T-cell (primary cell): ENCODE measurements at regions of chr11 and their contacts with region 1.

Region 1: DNA sequence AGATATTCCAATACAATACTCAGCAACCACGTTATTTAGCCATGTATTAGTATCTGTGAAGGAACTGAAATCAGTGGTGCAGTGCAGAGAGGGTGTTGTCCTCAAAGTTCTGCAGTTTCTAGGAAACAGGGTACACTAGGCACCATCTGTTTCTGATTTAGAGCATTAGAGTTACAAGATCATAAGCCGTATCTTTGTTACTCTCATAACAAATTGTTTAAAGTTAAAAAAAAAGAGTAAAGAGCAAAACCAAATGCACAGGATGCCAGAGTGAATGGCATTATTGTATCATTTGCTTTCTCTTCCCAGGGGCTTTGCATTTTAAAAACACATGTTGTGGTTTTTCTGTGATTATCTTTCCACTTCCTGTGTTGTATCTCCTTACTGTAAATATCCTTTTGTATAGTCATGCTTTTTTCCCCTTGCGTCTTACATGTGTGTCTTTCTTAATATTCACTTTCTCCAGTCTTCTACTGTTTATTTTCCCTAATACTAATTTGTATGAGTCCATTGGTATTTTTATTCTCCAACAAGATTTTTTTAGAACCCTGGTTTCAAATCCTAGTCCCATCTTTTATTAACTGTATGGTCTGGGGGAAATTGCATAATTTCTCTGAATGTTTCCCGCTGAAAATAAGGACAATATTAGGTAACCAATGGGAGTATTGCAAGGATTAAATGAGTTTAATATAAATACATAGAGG is 15.2 kb upstream of the NUP160 start:
- DNase-seq: peak in 7 of 35 experiments; percentile 2 to 49 (median 12)
- ATAC-seq: peak; percentile 79 to 87 (median 80)
- H3K4me3 ChIP-seq: no peak overlapping the region
- H3K4me3 Mint-ChIP-seq: peak overlapping the region in 2 of 3 donors; percentile 5 to 54
- H3K27ac ChIP-seq: peak overlapping the region; percentile 47
- H3K27ac Mint-ChIP-seq: peak overlapping the region; percentile 69 to 91
- H3K4me1 ChIP-seq: peaks cover 21 to 25% of the 10 kb centered on the region in 2 experiments
- H3K4me1 Mint-ChIP-seq: peaks cover 33 to 51% (median 42%) of the 10 kb centered on the region in 3 donors
- H3K27me3 ChIP-seq: no peaks in the 10 kb centered on the region
- H3K27me3 Mint-ChIP-seq: no peaks in the 10 kb centered on the region

Region 2: DNA sequence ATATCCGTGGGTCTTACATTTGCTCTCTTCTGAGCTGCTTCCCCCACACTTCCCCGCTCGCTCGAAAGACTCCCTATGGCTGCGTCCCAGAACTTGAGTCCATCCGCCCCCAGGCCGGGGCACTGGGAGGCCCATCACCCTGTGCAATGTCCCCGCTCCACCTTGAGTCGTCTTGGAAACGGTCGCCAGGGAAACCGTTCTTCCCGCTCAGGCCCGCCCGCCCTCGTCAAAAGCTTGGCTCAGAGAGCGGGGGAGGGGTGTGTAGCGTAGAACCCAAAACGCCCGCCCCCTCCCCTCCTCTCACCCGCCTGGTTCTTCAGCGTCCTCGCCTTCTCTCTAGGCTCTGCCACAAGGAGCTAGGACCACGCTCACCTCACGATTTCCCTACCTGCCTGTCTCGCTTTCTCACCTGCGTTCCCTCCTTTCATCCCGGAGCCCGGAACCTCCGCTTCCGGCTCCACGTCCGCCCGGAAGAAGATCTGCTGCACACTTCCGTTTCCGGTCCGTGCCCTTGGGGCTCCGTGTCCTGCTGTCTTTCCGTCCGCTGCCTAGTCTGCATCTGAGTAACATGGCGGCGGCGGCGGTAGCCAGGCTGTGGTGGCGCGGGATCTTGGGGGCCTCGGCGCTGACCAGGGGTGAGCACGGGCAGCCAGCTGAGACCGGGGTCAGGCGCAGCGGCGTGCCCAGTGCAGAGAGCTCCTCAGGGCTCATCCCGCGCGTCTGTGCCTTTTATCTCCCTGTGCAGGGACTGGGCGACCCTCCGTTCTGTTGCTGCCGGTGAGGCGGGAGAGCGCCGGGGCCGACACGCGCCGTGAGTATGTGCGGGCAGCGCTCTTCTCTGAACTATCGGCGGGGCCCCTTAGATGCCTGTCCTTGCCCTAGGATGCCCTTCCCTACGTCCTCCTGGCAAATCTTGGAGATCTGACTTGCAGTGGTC is 284.5 kb before region 1 on chr11 and contains the starts of genes KBTBD4 and NDUFS3:
- CTCF ChIA-PET with region 1: no interaction called
- POLR2A ChIA-PET with region 1: no interaction called
- DNase-seq: peak; percentile 70 to 95 (median 83)
- ATAC-seq: peak; percentile 92 to 95 (median 94)
- H3K4me3 ChIP-seq: peak within 1 kb of the TSS; percentile 78 to 84
- H3K4me3 Mint-ChIP-seq: peak within 1 kb of the TSS; percentile 87 to 100 (median 100)
- H3K27ac ChIP-seq: peak within 1 kb of the TSS; percentile 77
- H3K27ac Mint-ChIP-seq: peak within 1 kb of the TSS; percentile 95 to 100
- H3K4me1 ChIP-seq: peaks cover 20 to 36% of the 10 kb centered on the region in 2 experiments
- H3K4me1 Mint-ChIP-seq: peaks cover 38 to 45% (median 44%) of the 10 kb centered on the region in 3 donors
- H3K27me3 ChIP-seq: no peaks in the 10 kb centered on the region
- H3K27me3 Mint-ChIP-seq: no peaks in the 10 kb centered on the region
- total RNA-seq, gene KBTBD4: 19.1 to 23.6 (median 21.6) TPM
- total RNA-seq, gene NDUFS3: 69.1 to 105 (median 76.1) TPM

Region 3: GRCh38 chr11:47750725-47751124 is 112.6 kb before region 1 on chr11:
- CTCF ChIA-PET with region 1: no interaction called
- POLR2A ChIA-PET with region 1: interaction called in 1 of 2 experiments, 11 read pairs
- DNase-seq: no peak
- ATAC-seq: no peak
- H3K4me3 ChIP-seq: no peak overlapping the region
- H3K4me3 Mint-ChIP-seq: no peak overlapping the region
- H3K27ac ChIP-seq: no peak overlapping the region
- H3K27ac Mint-ChIP-seq: no peak overlapping the region
- H3K4me1 ChIP-seq: peaks cover 0 to 2% of the 10 kb centered on the region in 2 experiments
- H3K4me1 Mint-ChIP-seq: peaks cover 13 to 19% (median 16%) of the 10 kb centered on the region in 3 donors
- H3K27me3 ChIP-seq: no peaks in the 10 kb centered on the region
- H3K27me3 Mint-ChIP-seq: no peaks in the 10 kb centered on the region

Region 4: GRCh38 chr11:47967577-47968425 is 104.5 kb after region 1 on chr11:
- CTCF ChIA-PET with region 1: no interaction called
- POLR2A ChIA-PET with region 1: interaction called in 1 of 2 experiments, 11 read pairs
- DNase-seq: no peak
- ATAC-seq: no peak
- H3K4me3 ChIP-seq: no peak overlapping the region
- H3K4me3 Mint-ChIP-seq: no peak overlapping the region
- H3K27ac ChIP-seq: no peak overlapping the region
- H3K27ac Mint-ChIP-seq: no peak overlapping the region
- H3K4me1 ChIP-seq: no peaks in the 10 kb centered on the region
- H3K4me1 Mint-ChIP-seq: peaks cover 0 to 8% (median 0%) of the 10 kb centered on the region in 3 donors
- H3K27me3 ChIP-seq: no peaks in the 10 kb centered on the region
- H3K27me3 Mint-ChIP-seq: no peaks in the 10 kb centered on the region

Region 5: DNA sequence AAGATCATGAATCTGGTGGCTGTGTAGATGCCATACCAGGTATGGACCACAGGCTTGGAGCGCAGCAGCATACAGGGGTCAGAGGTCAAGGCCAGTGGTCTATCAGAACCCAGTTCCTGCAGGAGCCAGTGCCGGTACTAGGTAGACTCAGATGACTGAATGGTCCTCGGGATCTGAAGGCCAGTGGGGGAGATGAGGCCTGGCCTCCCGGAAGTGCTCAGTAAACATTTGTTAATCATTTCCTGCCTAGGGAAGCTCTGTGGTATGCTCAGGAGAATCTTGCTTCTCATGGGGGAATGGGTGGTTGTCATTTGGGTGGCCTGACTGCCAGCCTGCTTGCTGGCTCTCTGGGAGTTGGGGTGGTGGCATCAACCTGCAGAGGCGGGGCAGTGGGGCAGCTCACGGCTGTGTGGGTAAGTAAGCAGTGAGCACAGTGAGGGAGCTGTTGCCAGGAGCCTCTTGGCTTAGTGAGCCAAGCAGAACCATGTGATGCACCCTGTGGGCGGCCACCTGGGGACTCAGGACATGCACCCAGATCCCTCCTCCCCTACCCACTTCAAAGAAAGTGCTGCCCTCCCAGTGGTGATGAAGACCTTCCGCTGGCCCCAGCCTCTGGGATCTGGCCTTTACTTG is 150.0 kb after region 1 on chr11:
- CTCF ChIA-PET with region 1: no interaction called
- POLR2A ChIA-PET with region 1: no interaction called
- DNase-seq: peak in 30 of 35 experiments; percentile 17 to 70 (median 40)
- ATAC-seq: peak; percentile 26 to 56 (median 44)
- H3K4me3 ChIP-seq: no peak overlapping the region
- H3K4me3 Mint-ChIP-seq: peak overlapping the region; percentile 43 to 69 (median 49)
- H3K27ac ChIP-seq: peak overlapping the region; percentile 98
- H3K27ac Mint-ChIP-seq: peak overlapping the region; percentile 93 to 98
- H3K4me1 ChIP-seq: peaks cover 25 to 100% of the 10 kb centered on the region in 2 experiments
- H3K4me1 Mint-ChIP-seq: peaks cover 66 to 89% (median 86%) of the 10 kb centered on the region in 3 donors
- H3K27me3 ChIP-seq: no peaks in the 10 kb centered on the region
- H3K27me3 Mint-ChIP-seq: no peaks in the 10 kb centered on the region